Heart left ventricle (tissue), 16 donors: ENCODE measurements at regions of chr3 and their contacts with region 1.

Region 1: DNA sequence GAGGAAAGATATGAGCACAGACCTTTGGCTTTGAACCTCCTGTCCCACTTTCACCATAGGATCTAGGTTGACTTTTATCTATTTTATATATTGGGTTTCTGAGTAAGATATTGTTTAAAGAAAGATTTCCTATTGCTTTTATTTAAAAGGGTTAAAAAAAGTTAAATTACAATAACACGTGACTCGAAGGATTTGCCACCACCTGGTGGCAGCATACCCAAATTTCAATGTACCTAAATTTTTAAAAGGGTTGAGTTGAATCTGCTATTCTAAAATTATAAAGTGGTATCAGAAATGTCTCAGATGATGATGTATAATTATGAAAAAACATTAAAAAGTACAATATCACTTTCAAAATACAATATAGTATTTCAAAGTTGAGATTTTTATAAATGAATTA is 368.4 kb downstream of the MECOM start:
- DNase-seq: no peak
- ATAC-seq: no peak
- H3K4me3 ChIP-seq: no peak overlapping the region
- H3K27ac ChIP-seq: no peak overlapping the region
- H3K4me1 ChIP-seq: peaks cover 0 to 17% (median 0%) of the 10 kb centered on the region in 12 donors
- H3K27me3 ChIP-seq: no peaks in the 10 kb centered on the region
- CTCF ChIP-seq: peak; percentile 17 to 50 (median 38)
- POLR2A ChIP-seq: no peak

Region 2: GRCh38 chr3:169133178-169134161 is 161.7 kb before region 1 on chr3:
- intact Hi-C with region 1: loop called in 1 of 10 experiments (anchors 10 kb)
- DNase-seq: no peak
- ATAC-seq: peak in 3 of 4 donors; percentile 46 to 78 (median 55)
- H3K4me3 ChIP-seq: peak overlapping the region in 1 of 12 donors; percentile 9
- H3K27ac ChIP-seq: peak overlapping the region in 7 of 12 donors; percentile 6 to 61 (median 33)
- H3K4me1 ChIP-seq: peaks cover 0 to 47% (median 3%) of the 10 kb centered on the region in 12 donors
- H3K27me3 ChIP-seq: peaks cover 0 to 10% (median 0%) of the 10 kb centered on the region in 9 donors
- CTCF ChIP-seq: peak; percentile 19 to 63 (median 50)
- POLR2A ChIP-seq: no peak

Region 3: DNA sequence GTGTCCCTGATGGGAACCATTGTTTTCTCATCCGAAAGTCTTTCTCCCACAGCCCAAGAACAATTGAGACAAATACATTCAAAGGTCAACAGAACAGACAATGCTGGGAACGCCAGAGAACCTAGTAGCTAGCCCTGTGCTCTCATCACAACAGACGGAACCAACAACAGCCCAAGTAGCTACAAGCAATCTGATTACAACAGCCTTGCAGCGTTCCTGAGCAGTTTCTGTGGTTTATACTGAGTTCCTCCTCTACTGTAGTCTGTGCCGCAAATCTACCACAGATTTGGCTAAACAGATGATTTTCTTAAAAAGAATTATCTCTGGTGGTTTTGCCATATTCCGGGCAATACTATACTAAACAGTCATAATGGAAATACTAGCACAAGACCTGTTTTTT is 67.2 kb before region 1 on chr3:
- intact Hi-C with region 1: loop called in 1 of 10 experiments (anchors 10 kb)
- DNase-seq: peak in 1 of 5 donors; percentile 30
- ATAC-seq: peak in 3 of 4 donors; percentile 75 to 83 (median 80)
- H3K4me3 ChIP-seq: peak overlapping the region in 6 of 12 donors; percentile 2 to 20 (median 4)
- H3K27ac ChIP-seq: peak overlapping the region in 8 of 12 donors; percentile 5 to 54 (median 18)
- H3K4me1 ChIP-seq: peaks cover 0 to 20% (median 7%) of the 10 kb centered on the region in 12 donors
- H3K27me3 ChIP-seq: peaks cover 0 to 4% (median 0%) of the 10 kb centered on the region in 9 donors
- CTCF ChIP-seq: no peak
- POLR2A ChIP-seq: no peak

Region 4: DNA sequence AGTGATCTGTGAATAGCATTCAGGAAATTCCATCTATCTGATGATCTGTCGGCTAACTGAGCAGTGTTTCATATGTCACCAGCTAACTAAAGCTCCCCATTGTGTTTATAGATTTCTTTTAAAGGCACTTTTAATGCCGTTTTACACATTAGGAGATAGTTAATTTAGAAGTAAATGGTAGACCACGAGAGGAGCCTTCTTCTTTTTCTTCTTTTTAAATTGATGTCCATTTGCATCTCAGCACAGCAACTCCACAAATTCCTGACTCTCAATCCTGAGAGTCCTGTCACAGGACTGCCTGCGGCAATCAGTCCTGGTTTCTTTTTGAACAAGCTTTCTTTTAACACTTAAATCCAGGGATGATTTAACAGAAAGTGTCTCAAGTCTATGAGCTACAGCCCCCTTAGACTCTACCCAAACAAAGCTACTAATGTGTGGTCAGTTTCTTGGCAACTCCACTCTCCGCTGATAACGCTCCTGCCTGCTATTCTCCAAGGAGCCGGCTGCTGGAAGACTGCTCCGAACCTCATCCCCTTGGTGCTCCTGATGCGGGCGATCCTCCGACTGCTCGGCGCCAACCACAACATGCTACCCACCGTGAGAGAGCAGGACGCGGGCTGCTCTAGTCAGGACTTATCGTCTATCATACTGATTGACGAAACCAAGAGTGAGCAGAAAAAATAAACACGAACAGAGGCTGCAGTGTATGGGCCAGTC is 53.0 kb before region 1 on chr3:
- intact Hi-C with region 1: loop called in 1 of 10 experiments (anchors 2 kb)
- DNase-seq: peak; percentile 30 to 72 (median 49)
- ATAC-seq: peak; percentile 69 to 80 (median 76)
- H3K4me3 ChIP-seq: peak overlapping the region in 11 of 12 donors; percentile 21 to 59 (median 48)
- H3K27ac ChIP-seq: peak overlapping the region; percentile 35 to 81 (median 66)
- H3K4me1 ChIP-seq: peaks cover 0 to 31% (median 7%) of the 10 kb centered on the region in 12 donors
- H3K27me3 ChIP-seq: peaks cover 0 to 11% (median 0%) of the 10 kb centered on the region in 9 donors
- CTCF ChIP-seq: no peak
- POLR2A ChIP-seq: no peak